PC-9 (cell line): ENCODE measurements at regions of chr12 and their contacts with region 1.

Region 1: GRCh38 chr12:121223292-121224285 is 13.7 kb downstream of the P2RX4 start:
- DNase-seq: no peak
- H3K4me3 ChIP-seq: no peak overlapping the region
- H3K27ac ChIP-seq: no peak overlapping the region
- H3K4me1 ChIP-seq: peaks cover 27% of the 10 kb centered on the region
- H3K27me3 ChIP-seq: no peaks in the 10 kb centered on the region
- CTCF ChIP-seq: peak; percentile 47

Region 2: DNA sequence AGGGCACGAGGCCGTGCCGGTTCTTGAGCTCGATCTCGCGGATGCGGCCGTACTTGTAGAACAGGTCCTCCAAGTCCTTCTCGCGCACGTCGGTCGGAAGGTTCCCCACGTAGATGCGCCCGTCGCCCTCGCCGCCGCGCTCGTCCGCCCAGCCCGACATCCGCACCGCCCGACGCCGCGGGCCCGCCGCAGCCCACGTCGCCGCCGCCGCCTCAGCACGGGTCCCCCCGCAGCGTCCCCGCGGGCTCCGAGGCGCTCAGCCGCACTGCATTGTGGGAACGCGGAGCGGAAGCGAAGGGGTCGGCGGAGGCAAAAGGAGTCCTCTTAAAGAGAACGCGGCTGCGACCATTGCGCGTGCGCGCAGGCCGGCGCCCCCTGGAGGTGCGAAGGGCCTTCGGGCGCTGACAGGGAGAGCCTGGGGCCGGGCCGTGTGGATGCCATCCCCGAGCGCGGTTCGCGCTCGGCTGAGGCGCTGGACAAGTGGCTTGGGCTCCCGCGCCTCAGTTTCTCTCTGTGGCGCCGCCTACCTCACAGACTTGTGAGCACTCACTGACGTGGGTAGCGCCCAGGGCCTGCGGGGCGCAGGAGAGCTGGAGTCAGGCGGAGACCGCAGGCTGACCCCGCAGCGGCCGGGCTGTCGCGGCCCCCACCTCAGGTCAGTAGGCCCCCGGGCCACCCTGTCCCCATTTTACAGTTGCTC is 754.0 kb before region 1 on chr12 and contains the start of gene SRSF9:
- CTCF ChIA-PET with region 1: interaction called, 10 read pairs
- POLR2A ChIA-PET with region 1: no interaction called
- intact Hi-C with region 1: no loop called
- DNase-seq: peak; percentile 82 to 94
- H3K4me3 ChIP-seq: peak within 1 kb of the TSS; percentile 77
- H3K27ac ChIP-seq: peak within 1 kb of the TSS; percentile 54
- H3K4me1 ChIP-seq: peaks cover 52% of the 10 kb centered on the region
- H3K27me3 ChIP-seq: no peaks in the 10 kb centered on the region
- CTCF ChIP-seq: peak; percentile 77
- total RNA-seq, gene SRSF9: 231 and 253 TPM in 2 replicates

Region 3: GRCh38 chr12:121124402-121125098 is 99.0 kb before region 1 on chr12:
- CTCF ChIA-PET with region 1: no interaction called
- POLR2A ChIA-PET with region 1: no interaction called
- intact Hi-C with region 1: loop called (anchors 1 kb)
- DNase-seq: peak; percentile 83 to 99
- H3K4me3 ChIP-seq: no peak overlapping the region
- H3K27ac ChIP-seq: peak overlapping the region; percentile 70
- H3K4me1 ChIP-seq: peaks cover 18% of the 10 kb centered on the region
- H3K27me3 ChIP-seq: no peaks in the 10 kb centered on the region
- CTCF ChIP-seq: no peak

Region 4: GRCh38 chr12:121132601-121133481 is 90.7 kb before region 1 on chr12 and contains the start of gene P2RX7:
- CTCF ChIA-PET with region 1: no interaction called
- POLR2A ChIA-PET with region 1: no interaction called
- intact Hi-C with region 1: loop called (anchors 1 kb)
- DNase-seq: peak; percentile 90 to 91
- H3K4me3 ChIP-seq: peak within 1 kb of the TSS; percentile 34; the same call in 1 of the 2 replicates
- H3K27ac ChIP-seq: peak within 1 kb of the TSS; percentile 53
- H3K4me1 ChIP-seq: peaks cover 22% of the 10 kb centered on the region
- H3K27me3 ChIP-seq: no peaks in the 10 kb centered on the region
- CTCF ChIP-seq: no peak
- total RNA-seq, gene P2RX7: 2.2 and 3.2 TPM in 2 replicates

Region 5: DNA sequence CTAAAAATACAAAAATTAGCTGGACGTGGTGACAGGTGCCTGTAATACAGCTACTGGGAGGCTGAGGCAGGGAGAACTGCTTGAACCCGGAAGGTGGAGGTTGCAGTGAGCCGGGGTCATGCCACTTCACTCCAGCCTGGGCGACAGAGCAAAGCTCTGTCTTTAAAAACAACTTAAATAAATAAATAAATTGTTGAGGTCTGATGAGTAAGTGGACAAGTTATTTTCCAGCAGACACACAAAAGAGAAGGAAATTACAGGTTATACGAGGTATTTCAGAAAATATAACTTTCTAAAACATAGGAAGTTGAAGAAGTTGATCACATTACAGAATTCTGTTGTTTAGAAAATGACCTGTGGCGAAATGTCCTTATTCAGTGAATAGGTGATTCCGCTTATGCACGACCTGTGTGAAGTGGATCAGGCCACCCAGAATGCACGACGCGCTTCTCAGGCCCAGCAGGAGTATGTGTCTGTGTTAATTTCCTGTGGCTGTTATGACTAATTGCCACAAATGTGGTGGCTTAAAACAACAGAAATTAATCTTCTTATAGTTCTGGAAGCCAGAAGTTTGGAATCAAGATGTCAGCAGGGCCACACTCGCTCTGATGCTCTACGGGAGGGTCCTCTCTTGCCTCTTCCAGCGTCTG is 52.9 kb before region 1 on chr12:
- CTCF ChIA-PET with region 1: no interaction called
- POLR2A ChIA-PET with region 1: no interaction called
- intact Hi-C with region 1: loop called (anchors 5 kb)
- DNase-seq: peak; percentile 15 to 72
- H3K4me3 ChIP-seq: peak overlapping the region; percentile 11; the same call in 1 of the 2 replicates
- H3K27ac ChIP-seq: peak overlapping the region; percentile 72
- H3K4me1 ChIP-seq: peaks cover 19% of the 10 kb centered on the region
- H3K27me3 ChIP-seq: no peaks in the 10 kb centered on the region
- CTCF ChIP-seq: no peak

Region 6: GRCh38 chr12:121209624-121210572 is 13.7 kb before region 1 on chr12 and contains the start of gene P2RX4:
- CTCF ChIA-PET with region 1: no interaction called
- POLR2A ChIA-PET with region 1: no interaction called
- intact Hi-C with region 1: loop called (anchors 2 kb)
- DNase-seq: peak; percentile 56 to 82
- H3K4me3 ChIP-seq: peak within 1 kb of the TSS; percentile 70
- H3K27ac ChIP-seq: peak within 1 kb of the TSS; percentile 75
- H3K4me1 ChIP-seq: peaks cover 29% of the 10 kb centered on the region
- H3K27me3 ChIP-seq: no peaks in the 10 kb centered on the region
- CTCF ChIP-seq: peak; percentile 48; the same call in 1 of the 2 replicates
- total RNA-seq, gene P2RX4: 21.0 and 28.1 TPM in 2 replicates

Region 7: GRCh38 chr12:121326996-121327674 is 103.5 kb after region 1 on chr12:
- CTCF ChIA-PET with region 1: no interaction called
- POLR2A ChIA-PET with region 1: no interaction called
- intact Hi-C with region 1: no loop called
- DNase-seq: no peak
- H3K4me3 ChIP-seq: no peak overlapping the region
- H3K27ac ChIP-seq: no peak overlapping the region
- H3K4me1 ChIP-seq: no peaks in the 10 kb centered on the region
- H3K27me3 ChIP-seq: no peaks in the 10 kb centered on the region
- CTCF ChIP-seq: no peak

Region 8: DNA sequence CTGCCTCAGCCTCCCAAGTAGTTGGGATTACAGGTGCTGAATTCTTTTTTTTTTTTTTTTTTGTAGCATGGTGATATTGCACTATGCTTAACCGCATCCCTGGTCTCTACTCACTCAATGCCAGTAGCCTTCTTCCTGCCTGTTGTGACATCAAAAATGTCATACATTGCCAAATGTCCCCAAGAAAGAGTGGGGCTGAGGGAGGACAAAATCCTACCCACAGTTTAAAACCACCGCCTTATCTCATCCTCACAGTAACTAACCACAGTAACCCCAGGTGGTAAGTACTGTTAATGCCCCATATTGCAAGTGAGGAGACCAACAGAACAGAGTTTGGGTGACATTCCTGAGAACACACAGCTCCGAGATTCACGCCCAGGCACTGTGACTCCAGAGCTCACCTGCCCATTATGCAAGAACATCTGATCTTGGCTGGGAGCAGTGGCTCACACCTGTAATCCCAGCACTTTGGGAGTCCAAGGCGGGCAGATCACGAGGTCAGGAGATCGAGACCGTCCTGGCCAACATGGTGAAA is 426.3 kb after region 1 on chr12:
- CTCF ChIA-PET with region 1: no interaction called
- POLR2A ChIA-PET with region 1: no interaction called
- intact Hi-C with region 1: no loop called
- DNase-seq: no peak
- H3K4me3 ChIP-seq: no peak overlapping the region
- H3K27ac ChIP-seq: no peak overlapping the region
- H3K4me1 ChIP-seq: no peaks in the 10 kb centered on the region
- H3K27me3 ChIP-seq: no peaks in the 10 kb centered on the region
- CTCF ChIP-seq: no peak